Activated T-helper 1 cell treated with anti-CD3 and anti-CD28 coated beads, Interleukin-12 subunit alpha, Interleukin-12 subunit beta, Interleukin-2, Interleukin-4 antibody, amounts not matched to agents 30 ng/mL and 10 ng/mL and 1 ng/mL, durations not matched to agents 14 hours and 24 hours and 36 hours (primary cell): ENCODE measurements at regions of chr12 and their contacts with region 1.

Region 1: DNA sequence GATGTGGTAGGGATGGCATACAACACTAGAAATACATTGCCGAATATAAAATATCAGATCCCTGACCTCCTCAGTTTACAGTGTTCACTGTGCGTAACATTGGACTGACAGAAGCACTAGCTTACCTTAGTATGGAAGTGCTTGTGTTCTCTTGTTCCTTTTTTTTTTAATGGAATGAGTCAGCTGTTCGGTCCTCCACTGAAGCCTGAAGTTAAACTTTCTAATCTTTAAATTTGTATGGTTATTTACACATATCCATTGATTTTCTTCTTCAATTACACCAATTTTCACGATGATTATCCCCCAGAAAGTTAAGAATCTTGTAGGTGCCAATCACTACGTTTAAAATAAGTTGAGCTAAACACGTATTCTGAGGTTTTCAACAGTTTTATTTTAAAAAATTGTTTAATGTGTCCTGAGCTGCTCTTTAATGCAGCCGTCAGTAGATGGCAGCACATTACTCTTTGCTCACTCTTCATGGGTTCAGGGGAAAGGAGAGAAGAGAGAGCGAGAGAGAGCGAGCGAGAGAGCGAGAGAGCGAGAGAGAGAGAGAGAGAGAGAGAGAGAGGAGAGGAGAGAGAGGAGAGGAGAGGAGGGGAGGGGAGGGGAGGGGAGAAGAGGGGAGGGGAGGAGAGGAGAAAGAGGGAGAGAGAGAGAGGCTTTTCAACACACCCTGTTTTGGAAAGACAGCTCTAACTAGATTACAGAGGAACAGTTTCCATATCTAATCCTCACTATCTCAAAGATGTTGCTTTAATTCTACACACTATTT is 134.7 kb upstream of the SCAF11 start:
- DNase-seq: peak; percentile 42
- H3K4me3 Mint-ChIP-seq: peak overlapping the region; percentile 27
- H3K27ac Mint-ChIP-seq: peak overlapping the region; percentile 75
- H3K4me1 Mint-ChIP-seq: peaks cover 7% of the 10 kb centered on the region
- H3K27me3 Mint-ChIP-seq: peaks cover 36% of the 10 kb centered on the region

Region 2: GRCh38 chr12:46071769-46072624 is 53.0 kb before region 1 on chr12:
- intact Hi-C with region 1: loop called (anchors 1 kb)
- DNase-seq: peak; percentile 42
- H3K4me3 Mint-ChIP-seq: no peak overlapping the region
- H3K27ac Mint-ChIP-seq: no peak overlapping the region
- H3K4me1 Mint-ChIP-seq: peaks cover 11% of the 10 kb centered on the region
- H3K27me3 Mint-ChIP-seq: no peaks in the 10 kb centered on the region

Region 3: GRCh38 chr12:46364777-46365580 is 239.9 kb after region 1 on chr12:
- intact Hi-C with region 1: loop called (anchors 5 kb)
- DNase-seq: no peak
- H3K4me3 Mint-ChIP-seq: no peak overlapping the region
- H3K27ac Mint-ChIP-seq: peak overlapping the region; percentile 40
- H3K4me1 Mint-ChIP-seq: peaks cover 76% of the 10 kb centered on the region
- H3K27me3 Mint-ChIP-seq: no peaks in the 10 kb centered on the region

Region 4: GRCh38 chr12:46933947-46934346 is 808.9 kb after region 1 on chr12:
- intact Hi-C with region 1: loop called (anchors 1 kb)
- DNase-seq: no peak
- H3K4me3 Mint-ChIP-seq: no peak overlapping the region
- H3K27ac Mint-ChIP-seq: no peak overlapping the region
- H3K4me1 Mint-ChIP-seq: no peaks in the 10 kb centered on the region
- H3K27me3 Mint-ChIP-seq: peaks cover 25% of the 10 kb centered on the region

Region 5: DNA sequence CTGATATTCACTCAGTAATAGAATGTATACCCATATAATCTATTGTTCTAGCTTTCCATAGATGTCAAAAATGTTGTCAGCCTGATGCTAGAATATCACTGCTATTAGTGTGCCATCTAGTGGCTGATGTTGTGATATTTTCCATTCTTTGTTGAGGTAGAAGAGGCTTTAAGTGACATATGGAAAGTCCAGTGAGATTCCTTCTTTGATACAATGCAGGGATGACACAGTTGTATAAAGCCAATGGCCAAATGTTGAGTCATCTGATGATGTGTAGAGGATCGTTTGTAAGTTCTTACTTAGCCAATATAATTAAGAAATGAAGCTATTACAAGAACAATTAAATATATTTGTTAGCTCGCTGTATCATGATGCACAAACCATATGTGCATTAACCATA is 896.3 kb after region 1 on chr12:
- intact Hi-C with region 1: loop called (anchors 1 kb)
- DNase-seq: no peak
- H3K4me3 Mint-ChIP-seq: no peak overlapping the region
- H3K27ac Mint-ChIP-seq: no peak overlapping the region
- H3K4me1 Mint-ChIP-seq: no peaks in the 10 kb centered on the region
- H3K27me3 Mint-ChIP-seq: peaks cover 20% of the 10 kb centered on the region

Region 6: GRCh38 chr12:47048541-47048940 is 923.5 kb after region 1 on chr12:
- intact Hi-C with region 1: no loop called
- DNase-seq: no peak
- H3K4me3 Mint-ChIP-seq: no peak overlapping the region
- H3K27ac Mint-ChIP-seq: no peak overlapping the region
- H3K4me1 Mint-ChIP-seq: no peaks in the 10 kb centered on the region
- H3K27me3 Mint-ChIP-seq: peaks cover 6% of the 10 kb centered on the region